ENCODE measurements at regions of chr20 and their contacts with region 1.

Region 1: DNA sequence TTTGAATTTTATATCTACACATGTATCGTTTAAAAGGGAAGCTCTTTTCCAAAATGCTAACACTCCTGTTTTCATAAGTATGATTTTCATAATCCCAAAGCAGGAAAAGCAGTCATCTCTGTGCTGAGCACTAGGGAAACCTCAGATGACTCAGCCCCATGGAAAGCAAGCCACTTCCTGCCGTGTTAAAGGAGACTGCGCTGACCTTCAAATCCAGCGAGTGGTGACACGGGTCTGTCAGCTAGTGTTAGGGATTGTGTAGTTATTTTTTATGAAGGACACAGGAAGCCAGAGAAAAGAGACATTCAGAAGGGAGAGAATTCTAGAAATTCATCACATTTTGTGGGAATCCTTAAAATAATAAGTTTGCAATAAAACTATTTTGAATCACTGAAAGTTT is 57.0 kb upstream of the CD93 start:
- H3K4me3 Mint-ChIP-seq: no peak overlapping the region
- H3K27ac Mint-ChIP-seq: peak overlapping the region; percentile 88
- H3K4me1 Mint-ChIP-seq: peaks cover 83% of the 10 kb centered on the region
- H3K27me3 Mint-ChIP-seq: no peaks in the 10 kb centered on the region

Region 2: DNA sequence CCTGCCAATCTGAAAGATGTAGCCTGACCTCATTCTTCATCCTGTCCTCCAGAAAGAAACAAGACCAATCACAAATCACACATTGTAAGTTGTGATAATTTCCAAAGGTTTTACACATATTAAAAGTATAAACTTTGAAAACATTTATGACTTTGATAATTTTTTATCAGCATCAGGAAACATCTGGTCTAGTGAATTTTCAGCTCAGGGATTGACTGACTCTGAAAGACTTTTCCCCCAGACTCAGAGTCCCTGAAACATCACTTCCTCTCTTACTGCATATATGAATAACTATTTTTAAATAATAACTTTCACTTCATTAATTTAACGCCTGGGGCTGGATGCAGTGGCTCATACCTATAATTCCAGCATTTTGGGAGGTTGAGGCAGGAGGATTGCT is 156.5 kb before region 1 on chr20:
- intact Hi-C with region 1: no loop called
- H3K4me3 Mint-ChIP-seq: no peak overlapping the region
- H3K27ac Mint-ChIP-seq: no peak overlapping the region
- H3K4me1 Mint-ChIP-seq: peaks cover 34% of the 10 kb centered on the region
- H3K27me3 Mint-ChIP-seq: peaks cover 57% of the 10 kb centered on the region

Region 3: GRCh38 chr20:23132930-23133559 is 10.1 kb before region 1 on chr20:
- intact Hi-C with region 1: loop called (anchors 1 kb)
- H3K4me3 Mint-ChIP-seq: no peak overlapping the region
- H3K27ac Mint-ChIP-seq: peak overlapping the region; percentile 98
- H3K4me1 Mint-ChIP-seq: peaks cover 87% of the 10 kb centered on the region
- H3K27me3 Mint-ChIP-seq: no peaks in the 10 kb centered on the region